ENCODE measurements at regions of chr3 and their contacts with region 1.

Region 1: DNA sequence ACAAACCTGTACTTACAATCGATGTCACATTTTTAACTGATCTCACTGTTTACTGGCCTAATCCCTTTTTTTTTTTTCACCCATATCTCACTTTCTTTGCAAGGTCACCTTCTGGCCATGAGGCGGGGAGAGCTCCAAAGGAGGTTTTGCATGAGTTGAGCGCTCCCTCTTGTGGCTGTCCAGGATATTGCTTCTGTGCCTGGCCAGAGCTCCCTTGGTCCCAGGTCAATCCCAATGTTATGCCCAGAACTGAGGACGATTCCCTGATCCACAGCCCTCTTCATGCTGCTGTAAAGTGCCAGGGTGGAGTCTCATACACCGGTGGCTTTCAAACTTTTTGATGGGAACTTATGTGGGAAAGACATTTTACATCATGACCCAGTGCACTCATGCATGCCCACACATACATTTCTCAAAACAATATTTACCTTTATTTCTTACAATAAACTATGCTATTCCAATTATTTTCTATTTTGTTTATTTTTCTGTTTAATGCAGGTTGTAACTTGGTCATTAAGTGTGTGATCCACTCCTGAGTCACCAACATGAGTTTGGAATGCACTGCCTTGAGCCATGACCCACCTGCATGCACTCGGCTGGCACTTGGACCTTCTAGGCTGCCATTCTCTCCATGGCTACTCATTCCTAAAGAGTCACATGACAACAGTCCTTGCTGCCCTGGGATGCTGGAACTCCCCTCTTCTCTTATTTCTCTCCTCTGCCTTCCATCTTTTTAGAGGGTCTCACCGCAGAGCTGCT is 9.6 kb upstream of the SST start:
- DNase-seq: peak; percentile 34
- H3K4me3 Mint-ChIP-seq: no peak overlapping the region
- H3K27ac Mint-ChIP-seq: no peak overlapping the region
- H3K4me1 Mint-ChIP-seq: peaks cover 5% of the 10 kb centered on the region
- H3K27me3 Mint-ChIP-seq: peaks cover 44% of the 10 kb centered on the region

Region 2: DNA sequence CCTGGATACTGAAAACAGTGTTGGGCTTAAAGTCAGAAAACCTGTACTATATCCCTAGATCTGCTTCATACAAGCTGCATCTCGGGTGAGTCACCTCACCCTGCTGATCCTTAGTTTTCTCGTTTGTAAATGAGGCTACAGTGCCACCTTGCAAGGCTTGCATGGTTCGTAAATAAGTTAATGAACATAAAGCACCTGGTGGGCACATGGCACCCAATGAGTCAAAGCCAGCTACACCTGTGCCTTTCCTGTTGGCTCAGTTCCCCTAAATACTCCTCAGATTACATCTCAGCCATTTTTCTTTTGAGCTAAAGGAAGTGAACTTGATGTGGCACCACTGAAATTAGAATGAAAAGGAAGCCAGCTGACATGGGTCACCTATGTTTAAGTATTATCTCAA is 456.0 kb before region 1 on chr3:
- intact Hi-C with region 1: loop called (anchors 2 kb)
- DNase-seq: no peak
- H3K4me3 Mint-ChIP-seq: no peak overlapping the region
- H3K27ac Mint-ChIP-seq: no peak overlapping the region
- H3K4me1 Mint-ChIP-seq: no peaks in the 10 kb centered on the region
- H3K27me3 Mint-ChIP-seq: peaks cover 10% of the 10 kb centered on the region

Region 3: GRCh38 chr3:187616307-187616972 is 63.4 kb before region 1 on chr3:
- intact Hi-C with region 1: loop called (anchors 1 kb)
- DNase-seq: peak; percentile 28
- H3K4me3 Mint-ChIP-seq: no peak overlapping the region
- H3K27ac Mint-ChIP-seq: no peak overlapping the region
- H3K4me1 Mint-ChIP-seq: no peaks in the 10 kb centered on the region
- H3K27me3 Mint-ChIP-seq: peaks cover 30% of the 10 kb centered on the region

Region 4: DNA sequence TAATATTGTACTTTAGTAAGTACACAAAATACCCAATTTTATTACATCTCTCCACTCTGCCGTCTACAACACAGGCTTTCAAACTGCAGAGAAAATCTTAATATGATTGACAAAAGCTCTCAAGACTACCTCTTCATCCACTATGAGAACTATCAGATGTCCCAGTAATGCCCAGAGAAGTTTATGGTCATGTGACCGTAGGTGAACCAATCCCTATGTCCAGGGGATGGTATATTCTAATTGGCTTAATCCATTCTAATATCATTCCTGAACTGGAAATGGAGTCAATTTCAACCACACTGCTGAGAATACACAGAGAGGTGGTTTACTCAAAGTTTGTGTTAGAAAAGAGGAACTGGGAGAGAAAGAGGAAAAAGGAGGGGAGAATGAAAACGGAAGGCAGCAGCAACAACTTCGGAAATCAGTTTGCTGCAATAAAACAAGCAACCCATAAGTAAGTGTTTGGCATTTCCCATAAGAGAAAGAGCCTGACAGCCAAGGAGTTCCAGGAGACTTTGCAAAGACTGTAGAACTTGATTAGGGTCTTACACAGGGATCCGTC is 16.9 kb before region 1 on chr3:
- intact Hi-C with region 1: no loop called
- DNase-seq: no peak
- H3K4me3 Mint-ChIP-seq: no peak overlapping the region
- H3K27ac Mint-ChIP-seq: no peak overlapping the region
- H3K4me1 Mint-ChIP-seq: no peaks in the 10 kb centered on the region
- H3K27me3 Mint-ChIP-seq: peaks cover 27% of the 10 kb centered on the region

Region 5: DNA sequence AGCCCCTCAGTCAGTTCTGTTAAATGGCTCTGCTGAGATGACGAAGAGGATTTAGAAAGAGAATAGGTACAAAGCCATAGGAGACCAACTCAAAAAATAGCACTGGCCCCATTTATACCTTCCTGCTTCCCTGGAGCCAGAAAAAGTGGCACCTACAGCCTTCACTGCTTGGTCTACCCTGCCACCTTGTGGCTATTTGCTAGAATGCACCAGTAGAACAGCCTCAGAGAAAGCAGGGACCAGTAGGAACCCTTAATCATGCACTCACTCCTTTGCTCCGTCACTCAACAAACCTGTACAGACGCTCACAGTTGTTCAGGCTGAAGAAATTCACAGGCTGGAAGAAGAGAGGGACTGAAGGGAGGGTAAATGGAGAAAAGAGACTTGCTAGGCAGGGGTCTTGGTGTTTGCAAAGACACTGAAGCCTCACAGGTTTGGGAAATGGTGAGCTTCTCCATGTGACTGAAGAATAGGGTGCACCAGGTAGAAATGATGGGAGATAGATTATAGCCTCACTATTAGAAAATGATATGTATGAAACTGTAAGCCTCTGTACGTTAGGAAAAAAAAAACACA is 34.7 kb after region 1 on chr3:
- intact Hi-C with region 1: loop called (anchors 1 kb)
- DNase-seq: peak; percentile 61
- H3K4me3 Mint-ChIP-seq: no peak overlapping the region
- H3K27ac Mint-ChIP-seq: no peak overlapping the region
- H3K4me1 Mint-ChIP-seq: peaks cover 8% of the 10 kb centered on the region
- H3K27me3 Mint-ChIP-seq: peaks cover 9% of the 10 kb centered on the region

Measured in activated T-helper 2 cell treated with anti-CD3 and anti-CD28 coated beads, Interferon-gamma antibody, Interleukin-2, Interleukin-4, amounts not matched to agents 10 μg/mL and 5 μg/mL and 100 μg/mL, durations not matched to agents 14 hours and 24 hours and 36 hours (primary cell).